ENCODE measurements at regions of chr3 and their contacts with region 1.

Region 1: DNA sequence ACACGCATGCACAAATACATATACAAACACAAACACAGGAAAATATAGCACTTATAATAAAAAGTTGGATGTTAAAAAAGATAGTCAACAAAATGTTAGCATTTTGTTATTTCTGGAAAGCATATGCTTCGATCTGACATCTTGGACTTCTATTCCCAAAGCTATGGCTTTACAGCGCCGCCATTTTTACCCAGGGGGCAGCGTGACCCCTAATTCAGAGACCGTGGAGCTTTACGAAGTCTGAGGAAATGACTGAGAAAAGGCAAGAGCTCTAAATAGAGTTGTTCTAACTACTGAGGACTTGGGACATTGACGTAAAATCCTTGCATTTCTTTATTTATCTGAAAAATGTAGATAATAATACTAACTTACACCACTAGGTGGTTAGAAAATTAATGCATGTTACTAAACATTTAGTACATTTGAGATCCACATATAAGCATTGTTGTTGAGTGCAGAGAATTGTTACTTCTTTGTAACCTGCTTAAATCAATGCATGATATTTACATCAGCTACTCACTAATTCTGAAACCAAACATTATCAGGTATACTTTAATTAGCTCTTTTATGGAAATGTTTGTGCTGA is 155.4 kb downstream of the TP63 start:
- DNase-seq: no peak
- H3K4me3 ChIP-seq: no peak overlapping the region
- H3K27ac ChIP-seq: no peak overlapping the region
- H3K4me1 ChIP-seq: peaks cover 18% of the 10 kb centered on the region
- H3K27me3 ChIP-seq: no peaks in the 10 kb centered on the region
- CTCF ChIP-seq: no peak
- POLR2A ChIP-seq: no peak

Region 2: GRCh38 chr3:189744232-189744631 is 42.3 kb before region 1 on chr3:
- CTCF ChIA-PET with region 1: no interaction called
- POLR2A ChIA-PET with region 1: no interaction called
- dilution Hi-C with region 1: no loop called
- intact Hi-C with region 1: no loop called
- DNase-seq: no peak
- H3K4me3 ChIP-seq: no peak overlapping the region
- H3K27ac ChIP-seq: no peak overlapping the region
- H3K4me1 ChIP-seq: peaks cover 5% of the 10 kb centered on the region
- H3K27me3 ChIP-seq: no peaks in the 10 kb centered on the region
- CTCF ChIP-seq: no peak
- POLR2A ChIP-seq: no peak

Region 3: GRCh38 chr3:189771842-189772494 is 14.6 kb before region 1 on chr3:
- CTCF ChIA-PET with region 1: no interaction called
- POLR2A ChIA-PET with region 1: no interaction called
- dilution Hi-C with region 1: no loop called
- intact Hi-C with region 1: loop called (anchors 1 kb)
- DNase-seq: no peak
- H3K4me3 ChIP-seq: no peak overlapping the region
- H3K27ac ChIP-seq: no peak overlapping the region
- H3K4me1 ChIP-seq: peaks cover 4% of the 10 kb centered on the region
- H3K27me3 ChIP-seq: no peaks in the 10 kb centered on the region
- CTCF ChIP-seq: no peak
- POLR2A ChIP-seq: no peak

Region 4: DNA sequence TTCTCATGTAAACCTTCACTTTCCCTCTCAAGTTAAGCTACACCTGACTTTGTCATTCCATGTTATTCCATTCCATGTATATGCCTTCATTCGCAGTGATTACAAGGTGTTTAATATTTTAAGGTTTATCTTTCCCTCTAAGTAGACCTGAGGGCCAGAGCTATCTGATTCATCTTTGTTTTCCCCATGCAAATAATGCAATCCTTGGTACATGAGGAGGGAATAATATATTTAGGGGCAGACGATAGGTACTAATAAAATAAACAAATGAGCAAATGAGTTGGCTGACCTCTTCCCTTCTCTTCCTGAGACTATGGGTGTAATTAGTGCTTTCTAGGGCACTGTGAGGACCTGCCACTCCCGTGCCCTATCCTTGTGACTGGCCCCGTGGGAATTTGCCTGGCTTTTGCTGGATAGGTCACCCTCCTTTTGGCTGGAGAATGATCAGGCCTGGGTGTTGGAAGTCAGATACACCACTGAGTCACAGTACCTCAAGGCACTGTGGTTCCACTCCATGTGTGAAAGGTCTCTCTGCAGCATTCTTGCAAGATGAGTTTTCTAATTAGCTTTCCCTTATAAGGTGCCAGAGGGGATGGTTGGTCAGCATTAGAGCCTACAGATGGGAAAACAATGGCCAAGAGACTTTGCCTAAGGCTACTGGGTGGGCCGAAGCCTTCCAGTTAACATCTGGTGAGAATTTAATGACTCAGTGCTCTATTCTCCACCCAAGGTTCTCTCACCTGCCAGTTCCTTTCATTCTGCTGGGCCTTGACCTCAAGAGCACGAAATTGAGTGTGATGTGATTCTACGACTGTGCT is 150.9 kb after region 1 on chr3:
- CTCF ChIA-PET with region 1: no interaction called
- POLR2A ChIA-PET with region 1: no interaction called
- dilution Hi-C with region 1: no loop called
- intact Hi-C with region 1: loop called (anchors 5 kb)
- DNase-seq: peak; percentile 88
- H3K4me3 ChIP-seq: no peak overlapping the region
- H3K27ac ChIP-seq: peak overlapping the region; percentile 57
- H3K4me1 ChIP-seq: peaks cover 16% of the 10 kb centered on the region
- H3K27me3 ChIP-seq: no peaks in the 10 kb centered on the region
- CTCF ChIP-seq: no peak
- POLR2A ChIP-seq: no peak

Region 5: GRCh38 chr3:190003681-190004123 is 217.1 kb after region 1 on chr3:
- CTCF ChIA-PET with region 1: no interaction called
- POLR2A ChIA-PET with region 1: no interaction called
- dilution Hi-C with region 1: no loop called
- intact Hi-C with region 1: no loop called
- DNase-seq: peak; percentile 86
- H3K4me3 ChIP-seq: no peak overlapping the region
- H3K27ac ChIP-seq: peak overlapping the region; percentile 82
- H3K4me1 ChIP-seq: peaks cover 22% of the 10 kb centered on the region
- H3K27me3 ChIP-seq: no peaks in the 10 kb centered on the region
- CTCF ChIP-seq: no peak
- POLR2A ChIP-seq: peak; percentile 49